CD4-positive, alpha-beta T cell (primary cell): ENCODE measurements at regions of chr19 and their contacts with region 1.

Region 1: DNA sequence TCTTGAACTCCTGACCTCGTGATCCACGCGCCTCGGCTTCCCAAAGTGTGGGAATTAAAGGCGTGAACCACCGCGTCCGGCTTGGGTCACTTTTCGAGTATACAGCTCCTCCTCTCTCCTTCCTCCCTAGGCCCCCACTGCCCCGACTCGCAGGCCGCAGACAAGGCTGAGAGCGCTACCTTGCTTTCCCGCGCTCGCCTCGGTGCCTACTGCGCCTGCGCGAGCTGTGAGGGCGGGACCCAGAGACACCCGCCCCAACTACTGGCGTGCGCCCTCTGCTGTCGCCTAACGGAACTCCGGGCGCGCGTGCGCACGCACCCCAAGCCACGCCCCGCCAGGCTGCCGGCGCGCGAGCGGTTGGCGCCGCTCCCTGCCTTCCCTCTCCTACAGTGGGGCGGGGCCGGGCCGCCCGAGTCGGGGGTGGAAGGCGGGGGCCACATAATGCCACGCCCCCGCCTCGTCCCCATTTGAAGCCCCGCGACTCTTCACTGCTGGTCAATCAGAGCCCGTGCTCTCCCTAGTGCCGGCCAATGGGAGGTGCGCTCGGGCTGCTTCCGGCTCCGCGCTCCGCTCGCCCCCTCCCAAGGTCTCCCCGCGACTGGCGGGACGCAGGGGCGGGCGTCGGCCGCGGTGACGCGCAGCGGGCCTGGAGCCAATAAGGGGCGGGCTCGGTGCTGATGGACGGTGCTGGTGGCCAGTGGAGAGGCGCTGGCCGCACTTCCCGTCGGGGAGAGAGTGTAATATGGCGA is at the start of gene RAB8A:
- DNase-seq: peak; percentile 98 to 100 (median 99)
- ATAC-seq: peak; percentile 86
- H3K4me3 ChIP-seq: peak within 1 kb of the TSS; percentile 94
- H3K4me3 Mint-ChIP-seq: peak within 1 kb of the TSS; percentile 95
- H3K27ac ChIP-seq: peak within 1 kb of the TSS; percentile 89 to 92
- H3K27ac Mint-ChIP-seq: peak within 1 kb of the TSS; percentile 96
- H3K4me1 ChIP-seq: peaks cover 51% of the 10 kb centered on the region
- H3K4me1 Mint-ChIP-seq: peaks cover 44% of the 10 kb centered on the region
- H3K27me3 ChIP-seq: no peaks in the 10 kb centered on the region
- H3K27me3 Mint-ChIP-seq: no peaks in the 10 kb centered on the region
- CTCF ChIP-seq: peak; percentile 84
- total RNA-seq, gene RAB8A: 74.9 to 79.0 TPM

Region 2: GRCh38 chr19:15836595-15837337 is 274.6 kb before region 1 on chr19:
- CTCF ChIA-PET with region 1: no interaction called
- POLR2A ChIA-PET with region 1: interaction called, 6 read pairs
- intact Hi-C with region 1: loop called in 1 of 2 experiments (anchors 1 kb)
- DNase-seq: peak; percentile 86 to 98 (median 95)
- ATAC-seq: peak; percentile 86
- H3K4me3 ChIP-seq: peak overlapping the region; percentile 96
- H3K4me3 Mint-ChIP-seq: peak overlapping the region; percentile 96
- H3K27ac ChIP-seq: peak overlapping the region; percentile 97 to 99
- H3K27ac Mint-ChIP-seq: peak overlapping the region; percentile 92
- H3K4me1 ChIP-seq: peaks cover 20% of the 10 kb centered on the region
- H3K4me1 Mint-ChIP-seq: peaks cover 18% of the 10 kb centered on the region
- H3K27me3 ChIP-seq: no peaks in the 10 kb centered on the region
- H3K27me3 Mint-ChIP-seq: no peaks in the 10 kb centered on the region
- CTCF ChIP-seq: no peak

Region 3: DNA sequence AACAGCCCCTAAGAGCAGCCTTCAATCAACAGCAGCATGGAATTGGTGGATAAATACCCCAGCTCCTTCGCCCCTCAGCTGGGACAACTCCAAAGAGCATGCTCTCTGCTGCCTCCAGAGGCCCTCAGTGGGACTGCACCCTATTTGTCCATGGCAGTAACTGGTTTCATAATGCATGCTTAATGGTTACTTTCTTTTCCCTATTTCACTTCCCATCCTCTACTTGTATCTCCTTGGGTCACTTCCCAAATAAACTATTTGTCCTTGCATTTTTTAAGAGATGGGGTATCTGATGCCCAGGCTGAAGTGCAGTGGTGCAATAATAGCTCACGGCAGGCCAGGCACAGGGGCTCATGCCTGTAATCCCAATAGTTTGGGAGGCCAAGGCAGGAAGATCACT is 48.5 kb before region 1 on chr19:
- CTCF ChIA-PET with region 1: interaction called, 12 read pairs
- POLR2A ChIA-PET with region 1: interaction called, 12 read pairs
- intact Hi-C with region 1: no loop called
- DNase-seq: peak; percentile 58 to 84 (median 66)
- ATAC-seq: peak; percentile 91
- H3K4me3 ChIP-seq: no peak overlapping the region
- H3K4me3 Mint-ChIP-seq: no peak overlapping the region
- H3K27ac ChIP-seq: no peak overlapping the region
- H3K27ac Mint-ChIP-seq: no peak overlapping the region
- H3K4me1 ChIP-seq: peaks cover 24% of the 10 kb centered on the region
- H3K4me1 Mint-ChIP-seq: peaks cover 18% of the 10 kb centered on the region
- H3K27me3 ChIP-seq: no peaks in the 10 kb centered on the region
- H3K27me3 Mint-ChIP-seq: no peaks in the 10 kb centered on the region
- CTCF ChIP-seq: peak; percentile 90

Region 4: GRCh38 chr19:16076154-16076957 is 35.0 kb before region 1 on chr19 and contains the start of gene TPM4:
- CTCF ChIA-PET with region 1: interaction called, 27 read pairs
- POLR2A ChIA-PET with region 1: interaction called, 39 read pairs
- intact Hi-C with region 1: loop called (anchors 1 to 2 kb)
- DNase-seq: peak; percentile 46 to 94 (median 74)
- ATAC-seq: peak; percentile 26
- H3K4me3 ChIP-seq: peak within 1 kb of the TSS; percentile 87
- H3K4me3 Mint-ChIP-seq: peak within 1 kb of the TSS; percentile 85
- H3K27ac ChIP-seq: peak within 1 kb of the TSS; percentile 72 to 83
- H3K27ac Mint-ChIP-seq: peak within 1 kb of the TSS; percentile 94
- H3K4me1 ChIP-seq: peaks cover 83% of the 10 kb centered on the region
- H3K4me1 Mint-ChIP-seq: peaks cover 73% of the 10 kb centered on the region
- H3K27me3 ChIP-seq: no peaks in the 10 kb centered on the region
- H3K27me3 Mint-ChIP-seq: no peaks in the 10 kb centered on the region
- CTCF ChIP-seq: no peak
- total RNA-seq, gene TPM4: 182 to 185 TPM

Region 5: GRCh38 chr19:16095071-16095571 is 16.2 kb before region 1 on chr19:
- CTCF ChIA-PET with region 1: interaction called, 7 read pairs
- POLR2A ChIA-PET with region 1: interaction called, 20 read pairs
- intact Hi-C with region 1: loop called in 1 of 2 experiments (anchors 2 kb)
- DNase-seq: no peak
- ATAC-seq: peak; percentile 66
- H3K4me3 ChIP-seq: no peak overlapping the region
- H3K4me3 Mint-ChIP-seq: peak overlapping the region; percentile 64
- H3K27ac ChIP-seq: peak overlapping the region in 1 of 2 donors; percentile 41
- H3K27ac Mint-ChIP-seq: peak overlapping the region; percentile 80
- H3K4me1 ChIP-seq: peaks cover 9% of the 10 kb centered on the region
- H3K4me1 Mint-ChIP-seq: peaks cover 32% of the 10 kb centered on the region
- H3K27me3 ChIP-seq: no peaks in the 10 kb centered on the region
- H3K27me3 Mint-ChIP-seq: no peaks in the 10 kb centered on the region
- CTCF ChIP-seq: no peak

Region 6: GRCh38 chr19:16136185-16136999 is 25.1 kb after region 1 on chr19:
- CTCF ChIA-PET with region 1: no interaction called
- POLR2A ChIA-PET with region 1: no interaction called
- intact Hi-C with region 1: no loop called
- DNase-seq: peak in 1 of 14 experiments; percentile 32
- ATAC-seq: no peak
- H3K4me3 ChIP-seq: no peak overlapping the region
- H3K4me3 Mint-ChIP-seq: no peak overlapping the region
- H3K27ac ChIP-seq: no peak overlapping the region
- H3K27ac Mint-ChIP-seq: peak overlapping the region; percentile 47
- H3K4me1 ChIP-seq: peaks cover 7% of the 10 kb centered on the region
- H3K4me1 Mint-ChIP-seq: no peaks in the 10 kb centered on the region
- H3K27me3 ChIP-seq: no peaks in the 10 kb centered on the region
- H3K27me3 Mint-ChIP-seq: no peaks in the 10 kb centered on the region
- CTCF ChIP-seq: no peak

Region 7: GRCh38 chr19:16153582-16154336 is 42.4 kb after region 1 on chr19:
- CTCF ChIA-PET with region 1: no interaction called
- POLR2A ChIA-PET with region 1: no interaction called
- intact Hi-C with region 1: loop called in 1 of 2 experiments (anchors 5 kb)
- DNase-seq: no peak
- ATAC-seq: no peak
- H3K4me3 ChIP-seq: no peak overlapping the region
- H3K4me3 Mint-ChIP-seq: no peak overlapping the region
- H3K27ac ChIP-seq: no peak overlapping the region
- H3K27ac Mint-ChIP-seq: no peak overlapping the region
- H3K4me1 ChIP-seq: no peaks in the 10 kb centered on the region
- H3K4me1 Mint-ChIP-seq: no peaks in the 10 kb centered on the region
- H3K27me3 ChIP-seq: no peaks in the 10 kb centered on the region
- H3K27me3 Mint-ChIP-seq: no peaks in the 10 kb centered on the region
- CTCF ChIP-seq: no peak

Region 8: GRCh38 chr19:16417660-16418596 is 306.6 kb after region 1 on chr19:
- CTCF ChIA-PET with region 1: no interaction called
- POLR2A ChIA-PET with region 1: no interaction called
- intact Hi-C with region 1: no loop called
- DNase-seq: peak; percentile 57 to 86 (median 67)
- ATAC-seq: peak; percentile 96
- H3K4me3 ChIP-seq: no peak overlapping the region
- H3K4me3 Mint-ChIP-seq: no peak overlapping the region
- H3K27ac ChIP-seq: no peak overlapping the region
- H3K27ac Mint-ChIP-seq: peak overlapping the region; percentile 33
- H3K4me1 ChIP-seq: peaks cover 10% of the 10 kb centered on the region
- H3K4me1 Mint-ChIP-seq: peaks cover 12% of the 10 kb centered on the region
- H3K27me3 ChIP-seq: no peaks in the 10 kb centered on the region
- H3K27me3 Mint-ChIP-seq: no peaks in the 10 kb centered on the region
- CTCF ChIP-seq: peak; percentile 89